Caco-2 (cell line): ENCODE measurements at regions of chr15 and their contacts with region 1.

Region 1: DNA sequence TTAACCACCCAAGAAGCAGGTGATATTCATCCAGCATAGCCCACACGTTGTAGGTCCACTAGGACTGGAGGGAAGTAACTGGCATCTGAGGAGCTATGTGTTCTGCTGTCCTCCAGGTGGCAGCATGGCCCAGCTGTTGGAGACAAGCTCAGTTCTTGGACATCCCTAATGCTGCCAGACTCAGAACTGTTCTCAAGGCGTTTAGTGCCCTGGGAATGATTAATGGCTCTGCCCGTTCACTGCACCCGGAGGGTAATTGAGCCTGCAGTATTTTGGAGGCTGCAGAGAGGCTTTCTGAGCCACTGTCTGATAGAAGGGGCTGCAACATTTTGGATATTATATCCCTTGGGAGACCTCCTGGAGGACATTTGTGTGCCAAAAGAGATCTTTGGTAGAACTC is 521.2 kb upstream of the SEMA6D start:
- DNase-seq: peak; percentile 74 to 78
- H3K4me3 ChIP-seq: no peak overlapping the region
- H3K4me3 Mint-ChIP-seq: no peak overlapping the region
- H3K27ac Mint-ChIP-seq: no peak overlapping the region
- H3K4me1 ChIP-seq: 0 out of 2 replicates have a peak, but pooled peaks cover 4% of the 10 kb centered on the region
- H3K4me1 Mint-ChIP-seq: no peaks in the 10 kb centered on the region
- H3K27me3 ChIP-seq: no peaks in the 10 kb centered on the region
- H3K27me3 Mint-ChIP-seq: no peaks in the 10 kb centered on the region
- CTCF ChIP-seq: peak; percentile 78 to 81

Region 2: DNA sequence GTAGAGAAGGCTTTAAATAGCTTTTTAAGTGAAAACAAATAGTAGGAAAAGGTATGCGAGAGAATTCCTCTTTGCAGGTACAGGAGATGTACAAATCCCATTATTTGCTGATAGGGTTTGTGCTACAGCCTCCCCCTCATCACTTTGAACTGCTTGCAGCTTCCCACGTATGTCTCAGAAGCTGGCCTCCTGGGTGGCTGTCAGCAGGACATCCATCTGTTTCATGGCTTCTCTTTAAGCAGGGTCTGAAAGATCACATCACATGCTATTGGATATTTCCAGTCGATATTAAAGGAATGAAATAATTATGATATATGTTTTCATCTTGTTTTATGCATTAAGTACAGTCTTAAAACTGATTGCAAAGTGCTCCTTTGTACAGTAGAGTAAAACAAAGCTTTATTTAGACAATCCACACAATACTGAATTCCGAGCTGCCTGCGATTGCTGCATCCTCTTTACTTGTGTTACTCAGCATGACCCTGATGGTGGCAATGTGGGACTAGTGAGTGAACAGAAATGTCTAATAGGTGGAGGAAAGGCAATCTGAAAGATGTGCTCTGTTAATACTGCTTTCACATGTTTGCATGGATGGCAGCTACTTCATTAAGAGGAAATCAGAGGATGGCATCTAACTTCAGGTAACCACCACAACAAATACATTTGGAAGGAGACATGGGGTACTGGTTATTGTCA is 409.3 kb before region 1 on chr15:
- CTCF ChIA-PET with region 1: interaction called, 7 read pairs
- POLR2A ChIA-PET with region 1: no interaction called
- intact Hi-C with region 1: loop called (anchors 10 kb)
- DNase-seq: no peak
- H3K4me3 ChIP-seq: no peak overlapping the region
- H3K4me3 Mint-ChIP-seq: no peak overlapping the region
- H3K27ac Mint-ChIP-seq: no peak overlapping the region
- H3K4me1 ChIP-seq: no peaks in the 10 kb centered on the region
- H3K4me1 Mint-ChIP-seq: no peaks in the 10 kb centered on the region
- H3K27me3 ChIP-seq: no peaks in the 10 kb centered on the region
- H3K27me3 Mint-ChIP-seq: peaks cover 8% of the 10 kb centered on the region
- CTCF ChIP-seq: no peak

Region 3: GRCh38 chr15:47273864-47274263 is 77.8 kb after region 1 on chr15:
- CTCF ChIA-PET with region 1: no interaction called
- POLR2A ChIA-PET with region 1: no interaction called
- intact Hi-C with region 1: no loop called
- DNase-seq: no peak
- H3K4me3 ChIP-seq: no peak overlapping the region
- H3K4me3 Mint-ChIP-seq: no peak overlapping the region
- H3K27ac Mint-ChIP-seq: no peak overlapping the region
- H3K4me1 ChIP-seq: no peaks in the 10 kb centered on the region
- H3K4me1 Mint-ChIP-seq: no peaks in the 10 kb centered on the region
- H3K27me3 ChIP-seq: no peaks in the 10 kb centered on the region
- H3K27me3 Mint-ChIP-seq: peaks cover 4% of the 10 kb centered on the region
- CTCF ChIP-seq: no peak

Region 4: GRCh38 chr15:47470983-47471382 is 274.9 kb after region 1 on chr15:
- CTCF ChIA-PET with region 1: interaction called, 12 read pairs
- POLR2A ChIA-PET with region 1: no interaction called
- intact Hi-C with region 1: loop called (anchors 1 kb)
- DNase-seq: no peak
- H3K4me3 ChIP-seq: no peak overlapping the region
- H3K4me3 Mint-ChIP-seq: no peak overlapping the region
- H3K27ac Mint-ChIP-seq: no peak overlapping the region
- H3K4me1 ChIP-seq: no peaks in the 10 kb centered on the region
- H3K4me1 Mint-ChIP-seq: no peaks in the 10 kb centered on the region
- H3K27me3 ChIP-seq: no peaks in the 10 kb centered on the region
- H3K27me3 Mint-ChIP-seq: peaks cover 7% of the 10 kb centered on the region
- CTCF ChIP-seq: no peak

Region 5: GRCh38 chr15:47685141-47685870 is 489.2 kb after region 1 on chr15:
- CTCF ChIA-PET with region 1: interaction called, 4 read pairs
- POLR2A ChIA-PET with region 1: no interaction called
- intact Hi-C with region 1: loop called (anchors 1 kb)
- DNase-seq: no peak
- H3K4me3 ChIP-seq: no peak overlapping the region
- H3K4me3 Mint-ChIP-seq: no peak overlapping the region
- H3K27ac Mint-ChIP-seq: no peak overlapping the region
- H3K4me1 ChIP-seq: no peaks in the 10 kb centered on the region
- H3K4me1 Mint-ChIP-seq: no peaks in the 10 kb centered on the region
- H3K27me3 ChIP-seq: no peaks in the 10 kb centered on the region
- H3K27me3 Mint-ChIP-seq: peaks cover 7% of the 10 kb centered on the region
- CTCF ChIP-seq: peak in 1 of 2 experiments; percentile 9

Region 6: GRCh38 chr15:47987908-47988532 is 792.0 kb after region 1 on chr15:
- CTCF ChIA-PET with region 1: interaction called, 54 read pairs
- POLR2A ChIA-PET with region 1: no interaction called
- intact Hi-C with region 1: loop called (anchors 1 kb)
- DNase-seq: peak in 1 of 2 experiments; percentile 27
- H3K4me3 ChIP-seq: no peak overlapping the region
- H3K4me3 Mint-ChIP-seq: no peak overlapping the region
- H3K27ac Mint-ChIP-seq: no peak overlapping the region
- H3K4me1 ChIP-seq: no peaks in the 10 kb centered on the region
- H3K4me1 Mint-ChIP-seq: no peaks in the 10 kb centered on the region
- H3K27me3 ChIP-seq: no peaks in the 10 kb centered on the region
- H3K27me3 Mint-ChIP-seq: peaks cover 6% of the 10 kb centered on the region
- CTCF ChIP-seq: peak; percentile 25 to 43